Left ventricle myocardium inferior (tissue), 1 donor: ENCODE measurements at regions of chr1 and their contacts with region 1.

Region 1: GRCh38 chr1:2786329-2787162 is 14.9 kb downstream of the TTC34 start:
- DNase-seq: peak; percentile 45
- H3K4me3 ChIP-seq: no peak overlapping the region
- H3K27ac ChIP-seq: no peak overlapping the region
- H3K4me1 ChIP-seq: no peaks in the 10 kb centered on the region
- H3K27me3 ChIP-seq: peaks cover 84% of the 10 kb centered on the region
- CTCF ChIP-seq: peak; percentile 81

Region 2: GRCh38 chr1:2415801-2416208 is 370.7 kb before region 1 on chr1:
- intact Hi-C with region 1: loop called (anchors 5 kb)
- DNase-seq: no peak
- H3K4me3 ChIP-seq: no peak overlapping the region
- H3K27ac ChIP-seq: no peak overlapping the region
- H3K4me1 ChIP-seq: peaks cover 34% of the 10 kb centered on the region
- H3K27me3 ChIP-seq: peaks cover 58% of the 10 kb centered on the region
- CTCF ChIP-seq: no peak

Region 3: GRCh38 chr1:2906085-2906484 is 119.5 kb after region 1 on chr1:
- intact Hi-C with region 1: no loop called
- DNase-seq: no peak
- H3K4me3 ChIP-seq: no peak overlapping the region
- H3K27ac ChIP-seq: no peak overlapping the region
- H3K4me1 ChIP-seq: no peaks in the 10 kb centered on the region
- H3K27me3 ChIP-seq: peaks cover 71% of the 10 kb centered on the region
- CTCF ChIP-seq: no peak